ENCODE measurements at regions of chr2 and their contacts with region 1.

Region 1: DNA sequence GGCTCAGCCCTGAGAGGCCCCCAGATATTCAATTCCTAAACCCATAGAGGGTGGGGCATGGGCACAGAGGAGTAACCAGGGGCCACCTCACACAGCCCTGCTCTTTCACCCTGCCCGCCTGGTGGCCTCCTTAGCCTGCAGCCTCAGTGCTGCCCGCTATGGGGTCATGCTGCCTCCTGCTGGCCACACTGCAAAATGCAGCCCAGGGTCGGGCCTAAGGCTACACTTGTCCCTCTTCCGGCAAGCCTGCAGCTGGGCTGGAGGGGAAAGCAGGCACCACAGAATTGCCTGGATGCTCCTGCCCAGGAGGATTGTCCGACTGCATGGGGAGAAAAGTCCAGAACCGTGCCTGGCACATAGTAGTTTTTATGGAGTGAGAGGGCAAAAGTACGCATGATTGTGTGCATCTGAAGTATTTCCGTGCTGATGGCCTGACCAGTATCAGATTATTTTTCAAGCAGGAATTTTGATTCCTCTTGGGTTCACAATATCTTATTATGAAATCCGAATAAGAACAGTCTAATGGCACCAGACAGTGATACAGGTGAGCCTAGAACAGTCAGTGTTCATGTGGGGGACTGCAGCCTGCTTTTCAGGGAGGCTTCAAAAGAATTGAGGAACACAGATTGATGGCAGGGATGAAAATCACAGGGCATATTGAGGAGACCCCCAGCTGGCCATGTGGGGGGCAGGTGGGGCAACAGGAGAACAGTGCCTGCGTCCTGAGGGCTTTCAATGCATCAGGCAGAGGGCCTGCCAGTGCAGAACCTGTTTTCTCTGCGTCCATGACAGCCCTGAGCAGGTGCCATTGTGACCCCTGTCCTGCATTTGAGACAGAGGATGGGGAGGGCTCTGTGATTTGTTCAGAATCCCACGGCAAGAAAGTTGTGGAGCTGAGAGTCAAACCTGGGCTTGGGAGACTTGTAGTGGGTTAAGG is 51.2 kb upstream of the ALPP start:
- DNase-seq: peak; percentile 89
- ATAC-seq: peak; percentile 83
- H3K4me3 Mint-ChIP-seq: no peak overlapping the region
- H3K27ac Mint-ChIP-seq: no peak overlapping the region
- H3K4me1 Mint-ChIP-seq: peaks cover 35% of the 10 kb centered on the region
- H3K27me3 Mint-ChIP-seq: no peaks in the 10 kb centered on the region

Region 2: DNA sequence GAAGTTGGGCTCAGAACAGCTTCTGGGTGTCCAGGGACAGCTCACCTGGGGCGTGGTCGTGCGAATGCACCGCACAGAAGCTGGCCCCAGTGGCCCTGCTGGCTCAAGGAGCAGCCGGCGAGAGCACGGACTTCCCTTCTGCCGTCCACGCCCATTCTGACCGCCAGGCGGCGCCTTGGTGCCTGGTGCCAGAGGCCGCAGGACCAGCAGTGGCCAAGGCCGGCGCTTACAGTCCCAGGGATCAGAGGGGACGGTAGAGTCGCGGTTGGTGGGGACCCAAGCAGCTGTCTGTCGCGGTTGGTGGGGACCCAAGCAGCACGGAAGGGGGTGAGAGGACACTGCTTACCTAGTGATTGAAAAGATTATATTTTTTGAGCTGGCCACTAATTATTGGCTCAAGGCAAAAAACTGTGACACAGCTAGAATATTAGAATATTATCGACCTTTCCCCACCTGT is 426.9 kb before region 1 on chr2:
- CTCF ChIA-PET with region 1: interaction called, 30 read pairs
- POLR2A ChIA-PET with region 1: no interaction called
- DNase-seq: peak; percentile 64
- ATAC-seq: peak; percentile 76
- H3K4me3 Mint-ChIP-seq: no peak overlapping the region
- H3K27ac Mint-ChIP-seq: no peak overlapping the region
- H3K4me1 Mint-ChIP-seq: no peaks in the 10 kb centered on the region
- H3K27me3 Mint-ChIP-seq: peaks cover 9% of the 10 kb centered on the region

Region 3: GRCh38 chr2:231925303-231926179 is 401.8 kb before region 1 on chr2:
- CTCF ChIA-PET with region 1: interaction called, 99 read pairs
- POLR2A ChIA-PET with region 1: no interaction called
- DNase-seq: peak; percentile 78
- ATAC-seq: peak; percentile 68
- H3K4me3 Mint-ChIP-seq: peak overlapping the region; percentile 60
- H3K27ac Mint-ChIP-seq: no peak overlapping the region
- H3K4me1 Mint-ChIP-seq: peaks cover 14% of the 10 kb centered on the region
- H3K27me3 Mint-ChIP-seq: peaks cover 34% of the 10 kb centered on the region

Region 4: DNA sequence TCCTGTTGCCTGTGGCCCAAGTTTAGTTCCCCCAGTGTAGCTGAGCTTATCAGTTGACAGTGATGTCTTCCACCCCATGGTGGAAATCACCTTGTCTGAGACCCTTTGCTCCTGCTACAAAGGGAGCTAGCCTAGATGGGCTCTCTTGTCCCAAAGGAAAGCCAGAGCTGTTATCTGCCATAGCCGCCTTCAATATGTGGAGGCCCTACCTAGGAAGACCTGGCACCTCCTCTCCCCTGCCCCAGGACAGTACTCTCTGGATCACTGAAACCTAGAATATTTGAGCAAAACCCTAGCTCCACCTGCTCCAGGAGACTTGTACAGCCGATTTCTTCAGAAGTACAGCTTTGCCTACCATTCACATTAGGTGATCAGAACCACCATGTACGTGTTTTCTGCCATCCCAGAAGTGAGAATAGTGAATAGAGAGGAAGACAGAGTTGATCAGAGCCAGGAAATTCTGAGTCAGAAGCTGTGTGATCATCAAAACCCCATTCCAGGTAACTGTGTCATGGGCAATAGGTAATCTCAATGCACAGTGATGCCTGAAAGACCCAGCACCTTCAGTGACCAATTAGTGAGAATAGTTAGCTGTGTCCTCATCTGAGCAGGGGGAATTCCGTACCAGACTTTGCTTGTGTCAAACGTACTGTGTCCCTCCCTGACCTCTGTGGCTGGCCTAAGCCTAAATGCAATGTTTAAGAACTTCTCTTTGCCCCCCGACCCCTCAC is 87.3 kb before region 1 on chr2:
- CTCF ChIA-PET with region 1: interaction called, 10 read pairs
- POLR2A ChIA-PET with region 1: no interaction called
- DNase-seq: no peak
- ATAC-seq: no peak
- H3K4me3 Mint-ChIP-seq: no peak overlapping the region
- H3K27ac Mint-ChIP-seq: peak overlapping the region; percentile 14
- H3K4me1 Mint-ChIP-seq: peaks cover 20% of the 10 kb centered on the region
- H3K27me3 Mint-ChIP-seq: no peaks in the 10 kb centered on the region

Region 5: GRCh38 chr2:232310121-232310520 is 17.3 kb before region 1 on chr2:
- CTCF ChIA-PET with region 1: interaction called, 98 read pairs
- POLR2A ChIA-PET with region 1: interaction called, 48 read pairs
- DNase-seq: peak; percentile 53
- ATAC-seq: peak; percentile 61
- H3K4me3 Mint-ChIP-seq: peak overlapping the region; percentile 53
- H3K27ac Mint-ChIP-seq: peak overlapping the region; percentile 85
- H3K4me1 Mint-ChIP-seq: peaks cover 79% of the 10 kb centered on the region
- H3K27me3 Mint-ChIP-seq: no peaks in the 10 kb centered on the region